GM23248 (cell line): ENCODE measurements at regions of chr10 and their contacts with region 1.

Region 1: GRCh38 chr10:28663576-28664313 is 13.6 kb upstream of the BAMBI start:
- DNase-seq: peak; percentile 91
- H3K4me3 ChIP-seq: no peak overlapping the region
- H3K27ac ChIP-seq: peak overlapping the region; percentile 6; the same call in 1 of the 2 replicates
- H3K4me1 ChIP-seq: peaks cover 23% of the 10 kb centered on the region
- H3K27me3 ChIP-seq: peaks cover 22% of the 10 kb centered on the region

Region 2: GRCh38 chr10:27884185-27884641 is 779.5 kb before region 1 on chr10:
- in situ Hi-C with region 1: no loop called
- DNase-seq: no peak
- H3K4me3 ChIP-seq: no peak overlapping the region
- H3K27ac ChIP-seq: no peak overlapping the region
- H3K4me1 ChIP-seq: no peaks in the 10 kb centered on the region
- H3K27me3 ChIP-seq: 0 out of 2 replicates have a peak, but pooled peaks cover 3% of the 10 kb centered on the region

Region 3: GRCh38 chr10:29304264-29305030 is 640.7 kb after region 1 on chr10:
- in situ Hi-C with region 1: loop called (anchors 10 kb)
- DNase-seq: peak; percentile 78
- H3K4me3 ChIP-seq: no peak overlapping the region
- H3K27ac ChIP-seq: no peak overlapping the region
- H3K4me1 ChIP-seq: no peaks in the 10 kb centered on the region
- H3K27me3 ChIP-seq: no peaks in the 10 kb centered on the region